ENCODE measurements at regions of chr22 and their contacts with region 1.

Region 1: GRCh38 chr22:25777870-25778269 is 35.9 kb downstream of the MYO18B start:
- DNase-seq: no peak
- H3K4me3 ChIP-seq: no peak overlapping the region
- H3K27ac ChIP-seq: no peak overlapping the region
- H3K4me1 ChIP-seq: no peaks in the 10 kb centered on the region
- H3K27me3 ChIP-seq: peaks cover 48% of the 10 kb centered on the region
- CTCF ChIP-seq: peak; percentile 46

Region 2: GRCh38 chr22:25202290-25202921 is 575.5 kb before region 1 on chr22:
- CTCF ChIA-PET with region 1: no interaction called
- POLR2A ChIA-PET with region 1: no interaction called
- intact Hi-C with region 1: loop called (anchors 10 kb)
- DNase-seq: peak; percentile 51 to 55
- H3K4me3 ChIP-seq: no peak overlapping the region
- H3K27ac ChIP-seq: no peak overlapping the region
- H3K4me1 ChIP-seq: no peaks in the 10 kb centered on the region
- H3K27me3 ChIP-seq: no peaks in the 10 kb centered on the region
- CTCF ChIP-seq: peak; percentile 88

Region 3: GRCh38 chr22:25465949-25466348 is 311.9 kb before region 1 on chr22:
- CTCF ChIA-PET with region 1: no interaction called
- POLR2A ChIA-PET with region 1: no interaction called
- intact Hi-C with region 1: loop called (anchors 1 kb)
- DNase-seq: no peak
- H3K4me3 ChIP-seq: no peak overlapping the region
- H3K27ac ChIP-seq: no peak overlapping the region
- H3K4me1 ChIP-seq: no peaks in the 10 kb centered on the region
- H3K27me3 ChIP-seq: no peaks in the 10 kb centered on the region
- CTCF ChIP-seq: no peak

Region 4: GRCh38 chr22:25572708-25573171 is 205.1 kb before region 1 on chr22:
- CTCF ChIA-PET with region 1: no interaction called
- POLR2A ChIA-PET with region 1: no interaction called
- intact Hi-C with region 1: loop called (anchors 10 kb)
- DNase-seq: no peak
- H3K4me3 ChIP-seq: no peak overlapping the region
- H3K27ac ChIP-seq: no peak overlapping the region
- H3K4me1 ChIP-seq: no peaks in the 10 kb centered on the region
- H3K27me3 ChIP-seq: peaks cover 18% of the 10 kb centered on the region; the same call in 1 of the 2 replicates
- CTCF ChIP-seq: no peak

Region 5: GRCh38 chr22:25702040-25702439 is 75.8 kb before region 1 on chr22:
- CTCF ChIA-PET with region 1: no interaction called
- POLR2A ChIA-PET with region 1: no interaction called
- intact Hi-C with region 1: loop called (anchors 10 kb)
- DNase-seq: no peak
- H3K4me3 ChIP-seq: no peak overlapping the region
- H3K27ac ChIP-seq: no peak overlapping the region
- H3K4me1 ChIP-seq: no peaks in the 10 kb centered on the region
- H3K27me3 ChIP-seq: peaks cover 36% of the 10 kb centered on the region
- CTCF ChIP-seq: peak; percentile 55

Region 6: GRCh38 chr22:26330966-26331625 is 553.2 kb after region 1 on chr22:
- CTCF ChIA-PET with region 1: no interaction called
- POLR2A ChIA-PET with region 1: no interaction called
- intact Hi-C with region 1: loop called (anchors 2 kb)
- DNase-seq: peak in 1 of 2 experiments; percentile 30
- H3K4me3 ChIP-seq: no peak overlapping the region
- H3K27ac ChIP-seq: no peak overlapping the region
- H3K4me1 ChIP-seq: no peaks in the 10 kb centered on the region
- H3K27me3 ChIP-seq: peaks cover 26% of the 10 kb centered on the region
- CTCF ChIP-seq: peak; percentile 92